Activated naive CD4-positive, alpha-beta T cell treated with anti-CD3 and anti-CD28 coated beads for 36 hours (primary cell): ENCODE measurements at regions of chr11 and their contacts with region 1.

Region 1: DNA sequence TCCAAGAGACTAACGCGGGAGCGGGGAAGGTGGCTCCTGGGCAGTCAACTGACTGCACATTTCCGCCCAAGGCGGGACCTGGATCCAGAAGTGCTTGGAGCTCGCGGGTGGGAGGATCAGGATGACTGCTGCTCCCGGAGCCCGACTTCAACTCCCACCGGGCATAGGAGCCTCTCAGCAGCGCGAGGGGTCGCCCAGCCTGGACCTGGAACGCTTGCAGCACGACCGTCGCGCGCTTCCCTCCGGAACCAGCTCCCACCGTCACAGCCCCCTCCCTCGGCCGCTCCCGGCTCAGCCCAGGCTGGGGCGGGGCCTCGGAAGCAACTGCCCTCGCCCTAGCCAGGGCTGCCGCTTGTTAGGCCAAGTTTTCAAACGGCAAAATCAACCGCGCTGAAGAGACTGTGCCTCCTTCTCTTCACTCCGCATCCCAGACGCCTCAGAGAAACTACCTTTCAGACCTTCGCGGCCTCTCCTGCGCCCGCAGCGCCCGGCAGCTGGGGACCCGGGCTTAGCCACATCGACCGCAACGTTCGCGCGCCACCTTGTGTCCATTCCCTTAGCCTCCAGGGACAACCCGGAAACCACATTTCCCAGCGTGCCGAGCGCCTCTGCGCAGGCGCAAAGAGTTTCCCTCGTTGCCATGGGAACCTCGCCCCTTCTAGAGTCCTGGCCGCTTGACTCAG is 14.0 kb downstream of the SSH3 start:
- DNase-seq: peak; percentile 99
- H3K4me3 Mint-ChIP-seq: peak overlapping the region; percentile 92
- H3K27ac Mint-ChIP-seq: peak overlapping the region; percentile 97
- H3K4me1 Mint-ChIP-seq: peaks cover 23% of the 10 kb centered on the region
- H3K27me3 Mint-ChIP-seq: no peaks in the 10 kb centered on the region

Region 2: DNA sequence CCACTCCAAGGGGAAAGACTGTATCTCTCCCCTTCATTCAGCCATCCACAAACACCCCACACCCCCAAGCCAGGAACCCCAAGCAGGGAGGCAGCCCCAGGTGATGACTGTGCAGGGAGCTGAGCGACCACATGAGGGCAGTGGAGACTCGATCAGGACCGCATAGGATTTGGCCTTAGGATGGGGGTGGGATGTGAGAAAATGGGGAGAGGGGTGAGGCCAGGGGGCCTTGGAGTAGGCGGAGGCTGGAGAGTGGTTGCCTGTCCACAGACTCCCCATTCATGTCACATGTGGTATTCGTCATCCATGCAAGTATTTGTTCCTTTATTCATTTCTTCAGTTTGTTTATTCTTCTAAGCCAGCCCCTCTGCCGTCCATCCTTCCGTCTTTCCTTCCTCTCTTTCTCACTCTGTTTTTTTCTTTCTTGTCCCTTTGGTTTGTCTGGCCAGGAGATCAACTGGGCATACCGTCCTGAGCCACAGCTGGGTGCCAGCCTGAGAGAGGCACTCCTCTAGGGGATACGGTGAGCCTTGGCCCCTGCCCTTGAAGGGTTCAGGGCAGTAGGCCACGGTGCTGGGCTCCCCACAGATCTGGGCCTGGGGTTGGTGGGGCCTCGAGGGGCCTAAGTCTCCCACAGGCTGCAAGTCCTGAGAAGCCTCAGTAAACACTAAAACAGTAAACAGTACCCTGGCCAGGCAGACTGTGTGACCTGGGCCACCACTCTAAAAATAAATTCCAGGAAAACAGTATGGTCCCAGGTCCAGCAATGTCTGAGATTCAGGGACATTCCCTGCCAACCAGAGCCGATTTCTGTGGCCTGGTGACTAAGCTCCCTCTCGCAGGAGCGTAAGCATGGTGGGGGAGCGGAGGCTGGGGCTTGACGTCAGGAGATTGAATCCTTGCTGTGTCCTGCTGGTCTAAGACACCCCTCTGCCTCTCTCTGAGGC is 263.2 kb before region 1 on chr11:
- CTCF ChIA-PET with region 1: no interaction called
- intact Hi-C with region 1: loop called (anchors 1 kb)
- DNase-seq: peak; percentile 75
- H3K4me3 Mint-ChIP-seq: no peak overlapping the region
- H3K27ac Mint-ChIP-seq: no peak overlapping the region
- H3K4me1 Mint-ChIP-seq: peaks cover 14% of the 10 kb centered on the region
- H3K27me3 Mint-ChIP-seq: peaks cover 2% of the 10 kb centered on the region

Region 3: GRCh38 chr11:67118801-67119584 is 198.4 kb before region 1 on chr11 and contains the start of gene KDM2A:
- CTCF ChIA-PET with region 1: interaction called, 4 read pairs
- intact Hi-C with region 1: loop called (anchors 2 kb)
- DNase-seq: peak; percentile 99
- H3K4me3 Mint-ChIP-seq: peak within 1 kb of the TSS; percentile 97
- H3K27ac Mint-ChIP-seq: peak within 1 kb of the TSS; percentile 92
- H3K4me1 Mint-ChIP-seq: peaks cover 41% of the 10 kb centered on the region
- H3K27me3 Mint-ChIP-seq: no peaks in the 10 kb centered on the region
- total RNA-seq, gene KDM2A: 57.7 to 58.8 TPM

Region 4: DNA sequence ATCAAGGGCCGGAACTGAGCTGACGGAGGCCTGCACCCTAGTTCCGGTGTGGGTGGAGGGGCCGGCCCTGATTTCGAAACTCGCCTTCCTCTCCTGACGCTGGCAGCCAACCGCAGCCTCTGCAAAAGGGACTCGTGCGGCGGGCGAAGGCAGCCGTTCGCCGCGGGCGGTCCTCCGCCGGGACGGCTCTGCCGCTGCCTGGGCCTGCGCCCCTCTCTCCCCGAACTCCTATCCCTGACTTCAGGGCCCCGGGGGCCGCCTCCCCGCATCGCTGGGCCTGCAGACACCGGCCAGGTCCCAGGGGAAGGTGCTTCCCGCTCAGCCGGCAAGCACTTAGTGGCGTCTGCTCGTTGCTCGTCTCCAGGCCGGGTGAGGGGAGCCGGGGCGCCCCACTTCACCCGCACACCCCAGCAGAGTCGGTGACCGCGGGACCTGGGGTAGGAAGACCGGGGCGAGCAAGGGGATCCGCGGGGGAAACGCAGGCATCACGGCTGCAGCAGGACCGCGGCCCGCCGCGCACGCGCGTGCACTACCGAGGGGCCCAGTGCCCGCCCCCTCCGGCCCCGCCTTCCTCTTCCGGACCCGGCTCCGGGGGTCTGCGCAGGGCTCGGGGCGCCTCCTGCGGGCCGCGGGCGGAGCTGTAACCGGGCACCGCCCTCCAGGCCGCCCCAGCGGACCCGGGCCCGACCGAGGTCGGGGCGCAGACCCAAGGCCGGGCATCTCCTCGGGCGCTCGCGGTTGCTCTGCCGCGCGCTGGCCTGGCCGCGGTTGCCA is 28.7 kb before region 1 on chr11:
- CTCF ChIA-PET with region 1: interaction called, 4 read pairs
- intact Hi-C with region 1: loop called (anchors 1 kb)
- DNase-seq: peak; percentile 95
- H3K4me3 Mint-ChIP-seq: peak overlapping the region; percentile 71
- H3K27ac Mint-ChIP-seq: peak overlapping the region; percentile 96
- H3K4me1 Mint-ChIP-seq: peaks cover 47% of the 10 kb centered on the region
- H3K27me3 Mint-ChIP-seq: no peaks in the 10 kb centered on the region

Region 5: DNA sequence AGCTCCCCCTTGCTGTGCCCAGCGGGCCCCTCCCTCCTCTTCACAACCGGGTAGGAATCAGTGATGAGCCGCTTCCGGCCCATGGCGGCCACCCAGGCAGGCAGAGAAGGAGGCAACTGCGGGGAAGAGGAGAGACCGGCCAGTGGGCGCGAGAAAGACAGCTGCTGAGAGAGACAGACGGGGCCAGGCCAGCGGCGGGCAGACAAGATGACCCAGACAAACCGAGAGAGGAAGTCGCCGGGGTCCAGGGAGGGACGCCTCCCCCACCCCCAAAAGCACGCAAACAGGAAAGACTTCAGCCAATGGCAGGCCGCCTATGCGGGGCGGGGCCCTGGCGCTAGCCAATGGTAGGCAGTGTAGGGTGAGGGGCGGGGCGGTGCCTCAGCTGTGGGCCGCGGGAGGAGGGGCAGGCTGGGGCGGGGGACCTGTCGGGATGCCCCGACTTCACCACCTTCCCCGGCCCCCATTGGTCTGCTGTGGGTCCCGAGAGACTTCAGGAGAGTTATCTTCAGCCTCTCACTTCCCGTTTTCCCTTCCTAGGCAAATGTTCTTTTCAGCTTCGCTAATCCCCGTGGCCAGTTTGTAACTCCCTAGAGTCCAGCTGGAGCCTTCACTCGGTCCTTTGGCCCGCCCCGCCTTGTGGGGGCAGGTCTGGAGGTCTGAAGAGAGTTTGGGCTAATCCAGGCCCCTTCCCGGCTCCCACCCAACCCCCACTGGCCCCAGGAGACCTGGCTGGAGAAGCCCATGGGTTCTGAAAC is 36.1 kb after region 1 on chr11 and contains the start of gene POLD4:
- CTCF ChIA-PET with region 1: interaction called, 27 read pairs
- intact Hi-C with region 1: no loop called
- DNase-seq: peak; percentile 97
- H3K4me3 Mint-ChIP-seq: peak within 1 kb of the TSS; percentile 92
- H3K27ac Mint-ChIP-seq: peak within 1 kb of the TSS; percentile 97
- H3K4me1 Mint-ChIP-seq: peaks cover 54% of the 10 kb centered on the region
- H3K27me3 Mint-ChIP-seq: no peaks in the 10 kb centered on the region
- total RNA-seq, gene POLD4: 40.7 to 42.0 TPM